ENCODE measurements at regions of chr19 and their contacts with region 1.

Region 1: GRCh38 chr19:4791170-4792018 is at the start of gene FEM1A:
- DNase-seq: peak; percentile 97
- CTCF ChIP-seq: peak; percentile 99

Region 2: GRCh38 chr19:4723367-4724187 is 67.8 kb before region 1 on chr19 and contains the start of gene DPP9:
- CTCF ChIA-PET with region 1: interaction called, 29 read pairs
- POLR2A ChIA-PET with region 1: interaction called, 3 read pairs
- DNase-seq: peak; percentile 100
- CTCF ChIP-seq: peak; percentile 40

Region 3: DNA sequence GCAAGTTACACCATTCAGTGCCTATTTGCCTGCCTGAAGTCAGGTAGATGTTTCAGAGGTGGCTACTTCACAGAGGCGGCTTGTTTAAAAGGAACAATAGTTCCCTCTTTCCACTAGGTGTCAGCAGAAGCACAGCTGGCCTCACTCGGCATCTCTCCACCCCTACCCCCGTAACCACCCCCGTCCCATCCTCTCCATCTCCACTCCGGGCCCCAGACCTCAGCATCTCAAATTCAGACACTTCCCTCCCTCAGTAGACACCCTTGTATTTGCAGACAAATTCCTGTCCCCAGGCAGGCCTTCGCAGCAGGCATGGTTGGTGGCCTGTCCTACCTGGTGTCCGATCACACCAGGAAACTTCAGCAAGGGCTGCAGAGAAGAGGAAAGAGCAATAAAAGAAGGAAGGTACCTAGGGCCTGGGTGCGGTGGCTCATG is 58.7 kb before region 1 on chr19:
- CTCF ChIA-PET with region 1: interaction called, 45 read pairs
- POLR2A ChIA-PET with region 1: interaction called, 3 read pairs
- DNase-seq: peak; percentile 83
- CTCF ChIP-seq: peak; percentile 59

Region 4: DNA sequence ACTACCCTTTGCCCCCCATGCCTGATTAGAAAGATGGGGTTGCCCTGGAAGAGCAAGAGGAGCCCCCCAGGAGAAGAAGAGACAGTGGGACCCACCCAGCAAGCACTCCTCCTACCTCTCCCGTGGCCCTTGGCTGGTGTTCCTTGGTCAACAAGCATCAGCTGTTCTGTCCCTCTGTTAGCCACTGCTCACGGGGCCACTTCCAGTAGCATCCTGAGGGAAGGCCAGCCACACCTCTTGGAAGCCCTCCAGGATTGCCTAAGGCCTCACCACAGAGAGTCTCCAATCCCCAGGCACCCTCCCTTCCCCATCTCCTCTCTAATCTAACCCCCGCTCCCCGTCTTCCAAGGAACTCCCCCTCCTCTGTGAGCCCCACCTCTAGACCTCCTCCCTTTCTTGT is 52.7 kb before region 1 on chr19:
- CTCF ChIA-PET with region 1: interaction called, 45 read pairs
- POLR2A ChIA-PET with region 1: interaction called, 3 read pairs
- DNase-seq: no peak
- CTCF ChIP-seq: no peak

Region 5: GRCh38 chr19:4745986-4746385 is 45.4 kb before region 1 on chr19:
- CTCF ChIA-PET with region 1: interaction called, 10 read pairs
- POLR2A ChIA-PET with region 1: no interaction called
- DNase-seq: no peak
- CTCF ChIP-seq: no peak

Region 6: DNA sequence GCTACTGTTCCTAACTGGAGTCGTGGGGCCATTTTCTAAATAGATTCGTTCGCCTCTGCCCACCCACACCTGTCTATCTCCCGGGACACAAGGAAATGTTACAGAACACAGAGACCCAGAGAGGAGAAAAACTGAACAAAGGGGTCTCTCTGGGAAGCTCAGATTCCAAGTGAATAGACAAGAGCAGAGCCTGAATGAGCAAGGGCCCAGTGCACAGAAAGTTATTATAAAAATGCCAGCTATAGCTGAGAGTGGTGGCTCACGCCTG is 27.1 kb before region 1 on chr19:
- CTCF ChIA-PET with region 1: interaction called, 12 read pairs
- POLR2A ChIA-PET with region 1: no interaction called
- DNase-seq: no peak
- CTCF ChIP-seq: no peak

Region 7: DNA sequence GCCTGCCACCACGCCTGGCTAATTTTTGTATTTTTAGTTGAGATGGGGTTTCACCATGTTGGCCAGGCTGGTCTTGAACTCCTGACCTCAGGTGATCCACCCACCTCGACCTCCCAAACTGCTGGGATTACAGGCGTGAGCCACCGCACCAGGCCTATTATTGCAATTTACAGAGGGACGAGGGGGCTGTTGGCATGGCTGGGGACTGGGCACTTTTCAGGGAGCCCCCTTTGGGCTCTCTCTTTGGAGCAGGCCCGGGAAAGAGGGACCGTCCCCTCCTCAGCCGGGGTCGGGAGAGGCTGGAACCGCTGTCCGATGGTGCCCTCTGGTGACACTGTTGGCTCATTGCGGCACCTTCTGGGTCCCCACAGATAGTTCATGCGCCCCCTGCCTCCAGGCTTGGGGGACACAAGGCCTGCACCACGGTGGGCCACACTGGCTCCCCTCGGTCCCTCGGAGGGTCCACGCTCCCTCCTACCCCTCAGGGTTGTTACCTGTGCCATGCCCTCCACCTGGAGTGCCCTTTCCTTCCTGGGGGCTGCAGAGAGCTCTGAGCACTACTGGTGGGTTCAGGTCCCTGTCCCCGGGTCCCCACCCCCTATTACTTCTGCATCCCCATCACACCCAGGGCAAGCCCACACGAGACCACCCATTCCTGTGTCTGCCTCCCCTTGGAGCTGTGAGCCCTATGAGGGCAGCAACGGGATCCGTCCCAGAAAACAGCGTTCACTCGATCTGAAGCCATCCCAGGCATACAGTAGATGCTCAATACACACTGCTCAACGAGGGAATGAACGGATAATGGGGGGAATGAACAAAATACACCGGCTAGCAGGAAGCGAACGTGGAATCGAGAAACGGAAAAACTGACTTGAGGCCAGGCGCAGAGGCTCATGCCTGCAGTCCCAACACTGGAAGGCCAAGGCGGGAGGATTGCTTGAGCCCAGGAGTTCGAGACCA is 12.6 kb after region 1 on chr19:
- CTCF ChIA-PET with region 1: interaction called, 26 read pairs
- POLR2A ChIA-PET with region 1: no interaction called
- DNase-seq: peak; percentile 84
- CTCF ChIP-seq: peak; percentile 89

Region 8: GRCh38 chr19:4935444-4935843 is 144.1 kb after region 1 on chr19:
- CTCF ChIA-PET with region 1: no interaction called
- POLR2A ChIA-PET with region 1: no interaction called
- DNase-seq: no peak
- CTCF ChIP-seq: no peak

Measured in GM10248 (cell line).